ENCODE measurements at regions of chr6 and their contacts with region 1.

Region 1: GRCh38 chr6:32087574-32088486 is 21.3 kb downstream of the TNXB start:
- DNase-seq: peak; percentile 96 to 97 (median 97)
- H3K4me3 ChIP-seq: peak overlapping the region; percentile 3
- H3K27ac ChIP-seq: peak overlapping the region; percentile 85 to 87
- H3K4me1 ChIP-seq: peaks cover 25% of the 10 kb centered on the region
- H3K27me3 ChIP-seq: no peaks in the 10 kb centered on the region
- CTCF ChIP-seq: peak; percentile 56 to 75 (median 64)
- EP300 ChIP-seq: no peak
- POLR2A ChIP-seq: no peak

Region 2: GRCh38 chr6:32047850-32048766 is 39.7 kb before region 1 on chr6:
- intact Hi-C with region 1: loop called in 1 of 4 experiments (anchors 1 kb)
- DNase-seq: peak; percentile 69 to 87 (median 83)
- H3K4me3 ChIP-seq: no peak overlapping the region
- H3K27ac ChIP-seq: peak overlapping the region; percentile 73 to 83
- H3K4me1 ChIP-seq: peaks cover 10% of the 10 kb centered on the region
- H3K27me3 ChIP-seq: no peaks in the 10 kb centered on the region
- CTCF ChIP-seq: peak; percentile 61 to 95 (median 85)
- EP300 ChIP-seq: no peak
- POLR2A ChIP-seq: no peak

Region 3: GRCh38 chr6:32113386-32114352 is 25.8 kb after region 1 on chr6:
- intact Hi-C with region 1: loop called in 1 of 4 experiments (anchors 2 kb)
- DNase-seq: peak; percentile 95 to 98 (median 97)
- H3K4me3 ChIP-seq: no peak overlapping the region
- H3K27ac ChIP-seq: peak overlapping the region; percentile 78 to 82
- H3K4me1 ChIP-seq: peaks cover 29% of the 10 kb centered on the region
- H3K27me3 ChIP-seq: no peaks in the 10 kb centered on the region
- CTCF ChIP-seq: peak in 2 of 3 donors; percentile 83 to 90
- EP300 ChIP-seq: peak; percentile 84
- POLR2A ChIP-seq: no peak

Region 4: DNA sequence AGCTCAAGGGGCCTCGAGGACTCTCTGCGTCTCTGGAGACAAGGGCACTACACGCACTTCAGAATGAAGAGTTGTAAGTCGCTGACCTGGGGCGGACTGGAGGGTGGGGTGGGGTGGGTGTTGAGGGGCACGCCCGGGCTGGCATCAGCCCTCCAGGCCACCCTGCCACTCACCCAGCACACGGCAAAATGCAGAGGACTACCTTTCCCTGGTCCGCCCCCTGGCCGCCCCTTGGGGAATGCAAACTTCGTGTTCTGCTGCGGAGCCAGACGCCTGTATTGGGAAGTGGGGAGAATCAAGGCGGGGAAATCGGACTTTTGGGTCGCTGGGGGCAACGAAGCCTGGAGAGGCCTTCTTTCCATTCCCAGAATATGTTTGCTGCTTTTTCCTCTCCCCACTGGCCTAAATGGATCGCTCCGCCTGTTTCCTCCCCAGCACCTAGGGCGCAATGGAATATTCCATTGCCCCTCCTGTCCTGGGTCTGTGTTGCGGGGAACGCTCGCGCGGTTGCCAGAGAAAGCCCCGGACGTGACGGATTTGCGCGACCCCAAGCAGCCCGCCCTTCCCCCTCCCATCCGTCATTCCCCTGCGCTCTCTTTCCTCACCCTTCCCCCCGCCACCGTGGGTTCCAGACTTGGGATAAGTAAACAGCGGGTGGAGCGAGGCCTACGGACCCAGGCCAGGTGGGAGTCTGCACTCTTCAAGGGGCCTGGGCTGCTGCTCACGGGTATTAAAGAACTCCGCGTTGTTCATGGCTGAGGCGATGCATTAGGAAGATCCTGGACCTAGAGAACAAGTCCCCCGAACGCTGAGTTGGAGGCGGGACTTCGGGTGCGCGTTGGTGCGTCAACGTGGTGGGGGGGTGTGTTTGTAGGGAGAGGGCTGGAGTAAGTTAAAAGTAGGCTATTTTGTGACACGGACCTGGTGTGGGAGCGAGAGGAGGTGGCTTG is 66.0 kb after region 1 on chr6 and contains the start of gene PPT2:
- intact Hi-C with region 1: loop called in 2 of 4 experiments (anchors 2 to 10 kb)
- DNase-seq: peak; percentile 94 to 97 (median 95)
- H3K4me3 ChIP-seq: peak within 1 kb of the TSS; percentile 51
- H3K27ac ChIP-seq: peak within 1 kb of the TSS; percentile 90 to 94
- H3K4me1 ChIP-seq: peaks cover 9% of the 10 kb centered on the region
- H3K27me3 ChIP-seq: no peaks in the 10 kb centered on the region
- CTCF ChIP-seq: peak in 2 of 3 donors; percentile 39 to 46
- EP300 ChIP-seq: peak; percentile 16
- POLR2A ChIP-seq: peak; percentile 71
- total RNA-seq, gene PPT2: 33.5 to 63.9 (median 43.9) TPM

Region 5: DNA sequence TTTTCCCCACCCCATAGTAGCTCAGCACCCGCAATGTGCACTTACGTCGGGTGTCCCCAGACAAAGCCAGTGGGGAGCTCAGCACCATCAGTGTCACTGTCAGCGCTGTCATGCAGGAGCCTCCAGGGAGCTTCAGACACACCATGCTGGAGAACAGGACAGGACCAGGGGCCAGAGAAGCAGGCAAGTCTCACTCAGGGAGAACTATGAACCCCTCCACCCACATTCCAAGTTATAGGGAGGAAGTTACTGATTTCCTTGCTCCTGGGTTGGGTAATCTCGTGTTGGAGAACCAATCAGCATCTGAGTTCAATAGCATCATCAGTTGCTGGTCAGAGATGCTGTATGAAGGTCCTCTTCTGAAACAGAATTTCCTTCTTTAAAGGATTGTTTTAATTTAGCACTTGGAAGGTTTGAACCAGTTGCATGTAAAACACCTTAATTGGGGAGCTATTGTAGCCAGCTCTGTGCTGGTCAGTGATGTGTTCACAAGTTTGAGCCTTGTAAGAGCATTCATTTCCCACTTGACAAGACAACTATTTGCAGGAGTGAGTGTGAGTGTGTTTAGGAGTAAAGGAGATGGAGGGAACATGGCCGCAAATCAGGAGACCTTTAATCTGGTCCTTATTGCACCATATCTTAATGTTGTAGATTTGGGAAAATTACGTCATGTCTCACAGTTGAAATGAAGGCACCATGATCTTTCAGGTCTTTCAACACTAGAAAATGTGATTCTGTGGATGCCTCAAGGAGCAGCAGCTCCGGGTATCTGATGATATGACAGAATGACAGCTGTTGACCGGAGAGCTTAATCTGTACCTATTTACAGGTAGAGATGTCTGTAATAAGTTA is 502.0 kb after region 1 on chr6 and contains the start of gene HLA-DRB1:
- intact Hi-C with region 1: no loop called
- DNase-seq: peak in 1 of 5 donors; percentile 15
- H3K4me3 ChIP-seq: no peak within 1 kb of the TSS
- H3K27ac ChIP-seq: no peak within 1 kb of the TSS
- H3K4me1 ChIP-seq: no peaks in the 10 kb centered on the region
- H3K27me3 ChIP-seq: no peaks in the 10 kb centered on the region
- CTCF ChIP-seq: no peak
- EP300 ChIP-seq: no peak
- POLR2A ChIP-seq: no peak
- total RNA-seq, gene HLA-DRB1: 16.4 to 136 (median 62.1) TPM

Measured in ovary (tissue), 10 donors.